Dorsolateral prefrontal cortex (tissue), 120 donors: ENCODE measurements at regions of chr7 and their contacts with region 1.

Region 1: DNA sequence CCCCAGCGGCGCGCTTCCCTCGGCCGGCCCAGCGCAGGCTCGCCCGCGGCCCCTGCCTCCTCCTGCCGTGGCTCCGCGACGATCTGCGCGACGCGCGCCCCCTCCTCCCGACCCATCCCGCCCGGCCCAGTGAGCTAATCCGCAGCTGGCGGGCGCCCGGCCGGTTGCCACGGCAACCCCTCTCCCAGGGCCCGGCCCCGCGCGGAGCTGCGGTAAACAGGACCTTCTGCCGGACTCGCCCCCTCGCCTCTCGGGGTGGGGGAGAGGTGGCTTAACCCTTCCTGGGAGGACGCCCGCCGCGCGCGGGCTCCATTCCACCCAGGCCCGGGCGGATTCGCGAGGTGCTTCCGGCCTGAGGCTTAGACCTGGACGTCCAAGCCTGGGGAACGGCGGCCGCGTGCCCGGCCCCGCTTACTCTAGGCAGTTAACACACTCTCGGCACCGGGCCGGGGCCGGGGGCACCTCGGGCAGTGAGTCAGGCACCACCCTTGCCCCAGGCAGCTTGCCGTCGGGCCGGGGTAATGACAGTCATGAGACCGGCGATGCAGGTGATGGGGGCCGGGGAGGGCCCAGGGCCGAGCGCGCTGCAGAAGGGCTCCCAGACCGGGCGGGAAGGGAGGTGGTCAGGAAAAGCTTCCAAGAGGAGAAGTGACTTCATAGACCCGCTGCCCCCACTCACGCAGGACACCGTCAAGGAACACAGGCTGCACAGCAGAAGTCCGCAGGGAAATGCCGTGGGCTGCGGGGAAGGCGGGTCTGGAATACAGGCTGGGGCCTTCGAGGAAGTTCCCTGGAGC is at the start of gene DENND2A:
- DNase-seq: peak; percentile 70 to 88 (median 78)
- H3K4me3 ChIP-seq: peak within 1 kb of the TSS; percentile 57 to 85 (median 72)
- H3K27ac ChIP-seq: peak within 1 kb of the TSS in 58 of 59 donors; percentile 2 to 93 (median 85)
- H3K27me3 ChIP-seq: peaks cover 0 to 8% (median 0%) of the 10 kb centered on the region in 45 donors
- CTCF ChIP-seq: peak in 1 of 56 donors; percentile 8
- total RNA-seq, gene DENND2A: 19.7 to 79.9 (median 34.1) TPM

Region 2: DNA sequence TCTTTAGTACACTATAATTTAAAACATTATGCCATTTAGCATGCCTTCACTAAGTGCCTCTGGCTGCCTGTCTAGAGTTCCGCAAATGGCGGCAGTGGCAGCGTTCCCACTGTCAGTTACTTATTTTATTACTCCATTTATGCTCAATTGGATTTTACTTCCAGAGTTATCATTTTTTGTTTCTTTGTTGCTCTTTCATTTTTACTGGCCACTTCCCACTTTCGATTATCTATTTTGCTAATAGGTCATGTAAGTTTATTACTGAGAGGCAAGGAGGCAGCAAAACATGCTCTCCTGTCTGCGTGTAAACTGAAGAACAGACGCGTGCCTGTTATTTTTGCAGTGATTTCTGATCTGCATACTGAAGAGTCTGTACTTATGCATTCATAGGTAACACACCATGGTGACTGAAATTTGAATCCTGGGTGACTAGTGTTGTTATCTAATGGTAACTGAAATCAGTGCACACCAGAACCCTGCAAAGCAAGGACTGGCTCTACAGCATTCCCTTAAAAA is 487.2 kb before region 1 on chr7:
- intact Hi-C with region 1: no loop called
- DNase-seq: no peak
- H3K4me3 ChIP-seq: no peak overlapping the region
- H3K27ac ChIP-seq: no peak overlapping the region
- H3K27me3 ChIP-seq: no peaks in the 10 kb centered on the region
- CTCF ChIP-seq: no peak

Region 3: DNA sequence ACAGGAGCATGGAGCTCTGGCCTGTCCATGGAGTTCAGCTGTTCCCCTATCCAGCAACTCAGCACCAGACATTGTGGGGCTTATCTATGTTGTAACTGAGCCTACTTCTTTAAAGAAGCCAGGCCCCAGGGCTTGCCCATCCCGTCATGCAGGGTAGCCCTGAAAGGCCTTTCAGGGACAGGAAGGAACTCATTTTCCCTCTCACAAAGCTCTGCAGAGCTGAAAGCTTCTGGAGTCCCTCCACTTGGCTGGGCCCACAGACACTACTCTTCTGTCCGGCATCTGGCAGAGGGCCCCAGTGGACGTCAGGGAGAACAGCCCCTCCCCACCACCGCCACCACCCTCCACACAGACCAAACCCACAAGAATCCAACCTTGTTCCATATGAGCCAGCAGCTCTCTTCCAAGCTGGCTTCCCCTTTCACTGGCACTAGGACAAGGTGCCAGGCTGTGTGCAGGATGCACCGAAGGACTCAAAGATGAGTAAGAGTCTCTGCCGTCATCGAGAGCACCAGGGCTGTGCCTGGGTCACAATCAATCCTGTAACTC is 33.4 kb before region 1 on chr7:
- intact Hi-C with region 1: loop called in 1 of 2 experiments (anchors 5 kb)
- DNase-seq: peak; percentile 17 to 89 (median 85)
- H3K4me3 ChIP-seq: peak overlapping the region in 4 of 59 donors; percentile 18 to 36 (median 21)
- H3K27ac ChIP-seq: peak overlapping the region in 37 of 59 donors; percentile 1 to 71 (median 36)
- H3K27me3 ChIP-seq: no peaks in the 10 kb centered on the region
- CTCF ChIP-seq: peak in 10 of 56 donors; percentile 6 to 42 (median 14)

Region 4: GRCh38 chr7:140752533-140752932 is 111.6 kb after region 1 on chr7:
- intact Hi-C with region 1: no loop called
- DNase-seq: no peak
- H3K4me3 ChIP-seq: no peak overlapping the region
- H3K27ac ChIP-seq: no peak overlapping the region
- H3K27me3 ChIP-seq: no peaks in the 10 kb centered on the region
- CTCF ChIP-seq: no peak